Posterior vena cava (tissue), 2 donors: ENCODE measurements at regions of chr2 and their contacts with region 1.

Region 1: GRCh38 chr2:202592566-202592965 is 42.2 kb upstream of the FAM117B start:
- DNase-seq: no peak

Region 2: DNA sequence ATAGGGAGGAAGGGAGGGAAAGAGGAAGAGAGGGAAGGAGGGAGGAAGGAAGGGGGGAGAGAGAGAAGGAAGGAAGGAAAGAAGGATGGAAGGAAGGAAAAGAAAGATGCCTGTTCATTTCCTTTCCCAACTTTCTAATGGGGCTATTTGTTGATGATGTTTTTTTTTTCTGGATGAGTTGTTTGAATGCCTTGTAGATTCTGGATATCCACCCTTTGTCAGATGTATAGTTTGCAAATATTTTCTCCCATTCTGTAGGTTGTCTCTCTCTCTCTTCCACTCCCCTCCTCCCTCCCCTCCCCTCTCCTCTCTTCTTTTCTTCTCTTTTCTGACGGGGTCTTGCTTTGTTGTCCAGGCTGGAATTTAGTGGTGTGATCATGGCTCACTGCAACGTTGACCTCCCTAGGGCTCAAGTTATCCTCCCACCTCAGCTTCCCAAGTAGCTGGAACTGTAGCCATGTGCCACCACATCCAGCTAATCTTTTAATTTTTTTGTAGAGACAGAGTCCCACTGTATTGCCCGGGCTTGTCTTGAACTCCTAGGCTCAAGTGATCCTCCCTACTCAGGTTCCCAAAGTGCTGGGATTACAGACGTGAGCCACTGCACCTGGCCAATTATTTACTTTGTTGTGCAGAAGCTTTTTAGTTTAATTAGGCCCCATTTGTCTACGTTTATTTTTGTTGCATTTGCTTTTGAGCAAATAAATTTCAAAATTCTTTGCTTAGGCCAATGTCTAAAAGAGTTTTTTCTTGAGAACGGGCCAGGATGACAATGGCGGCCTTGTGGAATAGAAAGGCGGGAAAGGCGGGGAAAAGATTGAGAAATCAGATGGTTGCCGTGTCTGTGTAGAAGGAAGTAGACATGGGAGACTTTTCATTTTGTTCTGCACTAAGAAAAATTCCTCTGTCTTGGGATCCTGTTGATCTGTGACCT is 15.0 kb before region 1 on chr2:
- intact Hi-C with region 1: loop called in 1 of 2 experiments (anchors 1 kb)
- DNase-seq: no peak

Region 3: DNA sequence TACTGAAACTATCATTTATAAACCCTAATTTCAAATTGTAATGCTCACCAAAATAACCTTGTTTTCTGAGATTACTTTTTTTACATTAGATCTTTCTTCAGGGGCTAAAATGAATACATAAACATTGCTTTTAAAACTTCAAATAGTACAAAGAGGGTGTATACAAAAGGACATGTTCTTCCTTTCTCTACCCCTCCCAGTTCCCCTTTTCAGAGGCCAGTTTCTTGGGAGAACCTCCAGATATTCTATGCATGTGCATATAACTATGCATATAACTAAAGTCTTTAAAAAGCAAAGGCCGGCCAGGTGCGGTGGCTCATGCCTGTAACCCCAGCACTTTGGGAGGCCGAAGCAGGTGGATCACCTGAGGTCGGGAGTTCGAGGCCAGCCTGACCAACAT is 31.6 kb after region 1 on chr2:
- intact Hi-C with region 1: no loop called
- DNase-seq: peak; percentile 29